HepG2 (cell line): ENCODE measurements at regions of chr1 and their contacts with region 1.

Region 1: GRCh38 chr1:6464514-6464836 is 1.5 kb downstream of the TNFRSF25 start:
- DNase-seq: peak; percentile 58
- ATAC-seq: peak; percentile 72
- H3K4me3 ChIP-seq: no peak overlapping the region
- H3K27ac ChIP-seq: no peak overlapping the region
- H3K4me1 ChIP-seq: peaks cover 21% of the 10 kb centered on the region
- H3K27me3 ChIP-seq: no peaks in the 10 kb centered on the region
- CTCF ChIP-seq: peak; percentile 86
- EP300 ChIP-seq: no peak
- POLR2A ChIP-seq: peak; percentile 3 to 17; a peak in 1 of 4 replicates
- RAD21 ChIP-seq: peak; percentile 75

Region 2: GRCh38 chr1:6423321-6423999 is 41.0 kb before region 1 on chr1:
- CTCF ChIA-PET with region 1: no interaction called
- POLR2A ChIA-PET with region 1: no interaction called
- in situ Hi-C with region 1: no loop called
- intact Hi-C with region 1: no loop called
- DNase-seq: no peak
- ATAC-seq: peak; percentile 75
- H3K4me3 ChIP-seq: peak overlapping the region in 1 of 3 experiments; percentile 46; a peak in 1 of 6 replicates
- H3K27ac ChIP-seq: no peak overlapping the region
- H3K4me1 ChIP-seq: peaks cover 43% of the 10 kb centered on the region
- H3K27me3 ChIP-seq: peaks cover 41 to 90% of the 10 kb centered on the region in 2 experiments
- CTCF ChIP-seq: peak; percentile 93
- EP300 ChIP-seq: no peak
- POLR2A ChIP-seq: no peak
- RAD21 ChIP-seq: peak; percentile 63

Region 3: GRCh38 chr1:6445062-6445763 is 19.3 kb before region 1 on chr1:
- CTCF ChIA-PET with region 1: interaction called, 5 read pairs
- POLR2A ChIA-PET with region 1: interaction called, 8 read pairs
- in situ Hi-C with region 1: no loop called
- intact Hi-C with region 1: loop called (anchors 2 kb)
- DNase-seq: peak; percentile 74
- ATAC-seq: peak; percentile 20
- H3K4me3 ChIP-seq: peak overlapping the region; percentile 50 to 78 (median 60); a peak in 5 of 6 replicates
- H3K27ac ChIP-seq: peak overlapping the region; percentile 62
- H3K4me1 ChIP-seq: peaks cover 42% of the 10 kb centered on the region
- H3K27me3 ChIP-seq: peaks cover 0 to 1% of the 10 kb centered on the region in 2 experiments; a peak in 2 of 5 replicates
- CTCF ChIP-seq: peak; percentile 96
- EP300 ChIP-seq: no peak
- POLR2A ChIP-seq: no peak
- RAD21 ChIP-seq: peak; percentile 62

Region 4: GRCh38 chr1:6450943-6451373 is 13.5 kb before region 1 on chr1:
- CTCF ChIA-PET with region 1: interaction called, 3 read pairs
- POLR2A ChIA-PET with region 1: interaction called, 10 read pairs
- in situ Hi-C with region 1: no loop called
- intact Hi-C with region 1: loop called (anchors 2 kb)
- DNase-seq: peak; percentile 89
- ATAC-seq: peak; percentile 39
- H3K4me3 ChIP-seq: peak overlapping the region; percentile 63 to 78 (median 77); a peak in 5 of 6 replicates
- H3K27ac ChIP-seq: peak overlapping the region; percentile 91
- H3K4me1 ChIP-seq: peaks cover 39% of the 10 kb centered on the region
- H3K27me3 ChIP-seq: no peaks in the 10 kb centered on the region; a peak in 1 of 5 replicates
- CTCF ChIP-seq: peak; percentile 28; the same call in 1 of the 2 replicates
- EP300 ChIP-seq: peak in 1 of 2 experiments; percentile 26; a peak in 1 of 4 replicates
- POLR2A ChIP-seq: no peak
- RAD21 ChIP-seq: no peak